Ascending aorta (tissue), 2 donors: ENCODE measurements at regions of chr11 and their contacts with region 1.

Region 1: GRCh38 chr11:10657308-10658271 is 36.0 kb downstream of the IRAG1 start:
- DNase-seq: no peak
- H3K4me3 ChIP-seq: peak overlapping the region; percentile 32 to 45
- H3K27ac ChIP-seq: peak overlapping the region; percentile 88 to 93
- H3K4me1 ChIP-seq: peaks cover 38 to 96% of the 10 kb centered on the region in 2 donors
- H3K27me3 ChIP-seq: no peaks in the 10 kb centered on the region
- CTCF ChIP-seq: no peak

Region 2: GRCh38 chr11:10618490-10618889 is 39.1 kb before region 1 on chr11:
- intact Hi-C with region 1: loop called (anchors 2 kb)
- DNase-seq: peak in 1 of 2 donors; percentile 85
- H3K4me3 ChIP-seq: no peak overlapping the region
- H3K27ac ChIP-seq: peak overlapping the region; percentile 82 to 97
- H3K4me1 ChIP-seq: peaks cover 18 to 39% of the 10 kb centered on the region in 2 donors
- H3K27me3 ChIP-seq: no peaks in the 10 kb centered on the region
- CTCF ChIP-seq: no peak

Region 3: GRCh38 chr11:10674911-10675440 is 17.4 kb after region 1 on chr11:
- intact Hi-C with region 1: loop called (anchors 2 kb)
- DNase-seq: peak; percentile 51 to 92
- H3K4me3 ChIP-seq: peak overlapping the region; percentile 15 to 42
- H3K27ac ChIP-seq: peak overlapping the region; percentile 88 to 93
- H3K4me1 ChIP-seq: peaks cover 8 to 74% of the 10 kb centered on the region in 2 donors
- H3K27me3 ChIP-seq: no peaks in the 10 kb centered on the region
- CTCF ChIP-seq: no peak